Right lobe of liver (tissue), 6 donors: ENCODE measurements at regions of chr3 and their contacts with region 1.

Region 1: GRCh38 chr3:16247276-16248061 is 17.3 kb downstream of the DPH3 start:
- DNase-seq: peak; percentile 70 to 82 (median 77)
- ATAC-seq: peak; percentile 86 to 93 (median 91)
- H3K4me3 ChIP-seq: no peak overlapping the region
- H3K27ac ChIP-seq: no peak overlapping the region
- H3K4me1 ChIP-seq: peaks cover 0 to 13% (median under 1%) of the 10 kb centered on the region in 4 donors
- H3K27me3 ChIP-seq: no peaks in the 10 kb centered on the region
- CTCF ChIP-seq: peak; percentile 91 to 96 (median 96)
- POLR2A ChIP-seq: no peak

Region 2: DNA sequence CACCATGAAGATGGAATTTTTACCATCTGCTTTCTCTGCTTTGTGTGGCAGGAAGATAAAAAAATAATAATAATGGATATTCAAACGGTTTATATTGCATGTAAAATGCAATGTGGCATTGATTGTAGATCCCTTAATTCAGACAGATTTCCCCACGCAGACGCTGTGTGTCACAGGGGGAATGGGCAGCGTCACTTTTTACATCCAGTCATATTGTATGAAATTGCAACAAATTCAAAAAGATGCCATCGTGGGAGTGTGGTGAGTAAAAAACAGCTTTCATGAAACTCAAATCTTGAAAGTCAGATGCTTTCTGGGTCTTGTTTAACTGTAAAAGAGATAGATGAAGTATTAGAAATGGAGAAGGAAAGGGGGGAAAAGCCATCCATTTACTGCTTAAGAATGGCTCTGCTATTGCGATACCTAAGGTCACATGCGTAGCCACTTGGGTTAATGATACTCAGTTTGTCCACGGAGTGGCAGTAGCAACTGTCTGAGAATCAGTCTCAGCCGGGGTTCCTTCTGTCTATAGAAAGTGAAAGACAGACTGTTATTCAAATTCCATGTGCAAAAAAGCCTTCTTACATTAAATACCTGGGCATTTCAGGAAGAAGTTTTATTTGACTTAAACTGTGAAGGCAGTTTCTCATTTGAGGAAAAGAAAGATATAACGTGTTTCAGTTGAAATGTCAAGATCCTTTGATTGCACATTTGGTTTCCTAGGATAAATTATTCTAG is 617.4 kb before region 1 on chr3:
- intact Hi-C with region 1: loop called (anchors 5 to 10 kb)
- DNase-seq: peak in 1 of 3 donors; percentile 67
- ATAC-seq: peak; percentile 93 to 96 (median 96)
- H3K4me3 ChIP-seq: peak overlapping the region in 2 of 3 donors; percentile 6 to 16
- H3K27ac ChIP-seq: peak overlapping the region in 2 of 3 donors; percentile 3 to 13
- H3K4me1 ChIP-seq: peaks cover 0 to 20% (median 7%) of the 10 kb centered on the region in 4 donors
- H3K27me3 ChIP-seq: no peaks in the 10 kb centered on the region
- CTCF ChIP-seq: peak; percentile 73 to 81 (median 78)
- POLR2A ChIP-seq: no peak

Region 3: DNA sequence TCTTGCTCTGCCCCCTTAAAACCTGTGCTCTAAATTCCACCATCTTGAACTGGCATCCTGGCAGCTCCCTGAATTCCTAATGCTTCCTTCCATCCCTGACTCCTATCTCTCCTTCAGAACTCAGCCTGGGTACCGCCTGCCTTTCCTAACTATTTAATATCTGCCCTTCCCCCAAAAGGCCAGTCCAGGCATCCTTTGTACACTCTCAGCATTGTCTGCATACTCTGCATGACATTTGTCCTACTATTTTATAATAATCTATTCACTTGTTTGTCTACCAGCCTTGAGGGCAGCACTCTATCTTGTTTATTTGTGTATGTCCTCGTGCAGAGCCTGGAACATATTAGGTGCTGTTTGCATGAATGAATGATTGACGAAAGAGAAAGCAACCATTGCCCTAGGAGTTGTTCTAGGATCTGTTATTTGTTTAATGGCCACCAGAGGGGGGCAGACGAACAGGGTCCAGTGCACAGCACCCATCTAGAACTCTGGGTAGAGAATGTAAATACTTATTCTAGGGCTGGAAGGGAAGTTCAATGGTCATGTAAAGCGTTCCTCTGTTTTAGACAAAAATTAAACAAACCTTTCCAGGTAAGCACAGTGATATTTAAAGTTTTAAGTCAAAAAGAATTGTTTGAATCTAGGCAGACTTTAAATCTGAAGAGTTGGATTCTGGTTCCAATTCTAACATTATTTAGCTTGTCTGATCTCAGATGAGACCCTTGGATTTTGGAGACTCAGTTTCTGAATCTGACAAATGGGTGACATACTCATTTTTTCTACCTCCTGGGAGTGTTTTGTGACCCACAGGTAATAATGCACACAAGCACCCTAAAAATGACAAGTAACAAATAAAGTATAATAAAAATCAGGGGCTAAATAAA is 198.8 kb before region 1 on chr3:
- intact Hi-C with region 1: loop called (anchors 5 to 10 kb)
- DNase-seq: peak in 1 of 3 donors; percentile 58
- ATAC-seq: peak; percentile 93 to 97 (median 96)
- H3K4me3 ChIP-seq: peak overlapping the region in 2 of 3 donors; percentile 17 to 25
- H3K27ac ChIP-seq: no peak overlapping the region
- H3K4me1 ChIP-seq: peaks cover 0 to 4% (median 0%) of the 10 kb centered on the region in 4 donors
- H3K27me3 ChIP-seq: no peaks in the 10 kb centered on the region
- CTCF ChIP-seq: peak; percentile 79 to 88 (median 83)
- POLR2A ChIP-seq: no peak

Region 4: DNA sequence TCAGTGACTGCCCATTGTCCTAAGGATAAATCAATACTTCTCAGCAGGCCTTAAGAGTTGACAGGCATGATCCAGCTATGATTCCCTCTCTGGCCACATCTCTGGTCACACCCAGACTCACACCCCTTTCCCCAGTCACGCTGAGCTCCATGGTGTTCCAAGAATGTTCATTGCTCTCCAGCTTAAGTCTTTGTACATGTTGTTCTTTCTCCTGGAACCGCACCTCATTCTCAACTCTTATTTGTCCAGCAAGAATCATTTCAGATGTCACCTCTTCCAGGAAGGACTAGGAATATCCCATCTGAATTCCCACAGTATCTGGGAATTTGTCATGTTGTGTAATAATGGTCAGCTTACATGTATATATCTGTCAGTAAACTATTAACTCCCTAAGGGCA is 191.3 kb before region 1 on chr3:
- intact Hi-C with region 1: loop called (anchors 5 to 10 kb)
- DNase-seq: no peak
- ATAC-seq: peak in 3 of 4 donors; percentile 28 to 55 (median 28)
- H3K4me3 ChIP-seq: no peak overlapping the region
- H3K27ac ChIP-seq: peak overlapping the region; percentile 33 to 67 (median 60)
- H3K4me1 ChIP-seq: peaks cover 0 to 20% (median 7%) of the 10 kb centered on the region in 4 donors
- H3K27me3 ChIP-seq: no peaks in the 10 kb centered on the region
- CTCF ChIP-seq: no peak
- POLR2A ChIP-seq: no peak

Region 5: GRCh38 chr3:16183601-16184270 is 63.7 kb before region 1 on chr3:
- intact Hi-C with region 1: loop called in 1 of 2 experiments (anchors 5 kb)
- DNase-seq: no peak
- ATAC-seq: peak in 1 of 4 donors; percentile 35
- H3K4me3 ChIP-seq: no peak overlapping the region
- H3K27ac ChIP-seq: no peak overlapping the region
- H3K4me1 ChIP-seq: no peaks in the 10 kb centered on the region
- H3K27me3 ChIP-seq: no peaks in the 10 kb centered on the region
- CTCF ChIP-seq: no peak
- POLR2A ChIP-seq: no peak

Region 6: DNA sequence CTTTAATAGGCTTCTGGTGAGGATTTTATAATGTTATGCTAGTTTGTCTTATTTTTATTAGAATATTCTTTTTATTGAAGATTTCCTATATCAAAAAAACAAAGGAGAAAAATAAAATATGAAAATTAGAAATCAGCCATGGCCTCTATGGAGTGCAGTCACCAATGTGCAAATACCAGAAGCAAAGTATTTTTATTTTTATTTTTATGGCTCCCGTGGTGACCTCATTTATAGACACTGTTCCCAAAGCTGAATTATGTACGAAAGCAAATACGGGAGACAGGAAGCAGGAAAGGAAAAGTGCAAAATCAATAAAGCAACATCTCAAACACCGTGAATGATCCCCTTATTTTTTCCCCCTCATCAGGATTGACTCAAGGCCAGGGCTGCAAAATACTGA is 322.6 kb after region 1 on chr3:
- intact Hi-C with region 1: no loop called
- DNase-seq: no peak
- ATAC-seq: no peak
- H3K4me3 ChIP-seq: no peak overlapping the region
- H3K27ac ChIP-seq: no peak overlapping the region
- H3K4me1 ChIP-seq: no peaks in the 10 kb centered on the region
- H3K27me3 ChIP-seq: no peaks in the 10 kb centered on the region
- CTCF ChIP-seq: no peak
- POLR2A ChIP-seq: no peak